GM12878 (cell line): ENCODE measurements at regions of chr1 and their contacts with region 1.

Region 1: DNA sequence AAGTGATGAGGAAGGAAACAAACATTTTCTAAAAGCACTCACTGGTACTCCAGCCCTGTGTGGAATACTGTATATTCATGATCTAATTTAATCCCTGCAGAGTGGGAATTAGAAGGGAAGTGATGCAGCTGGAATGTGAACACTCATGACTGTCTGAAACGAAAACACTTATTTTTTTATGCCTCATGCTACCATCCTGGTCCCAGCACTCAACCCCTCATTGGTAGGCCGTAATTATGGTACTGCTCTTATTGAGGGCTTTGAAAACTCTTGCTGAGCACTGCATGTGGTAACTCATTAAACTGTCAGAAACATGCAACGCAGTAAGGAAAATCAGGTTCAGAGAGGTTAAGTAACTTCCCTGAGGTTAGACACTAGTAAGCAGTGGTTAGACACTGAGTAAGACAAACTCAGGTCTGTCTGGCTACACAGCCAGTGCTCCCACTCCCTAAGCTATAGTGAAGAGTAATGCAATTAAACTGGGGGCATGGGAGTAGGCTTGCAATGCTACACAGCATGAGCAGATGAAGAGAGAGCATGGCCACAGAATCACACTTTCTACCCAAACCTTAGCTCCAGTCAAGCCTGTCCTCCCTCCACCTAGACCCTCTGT is 17.3 kb upstream of the TNFSF4 start:
- DNase-seq: no peak
- ATAC-seq: peak; percentile 13
- H3K4me3 ChIP-seq: no peak overlapping the region
- H3K27ac ChIP-seq: no peak overlapping the region
- H3K4me1 ChIP-seq: peaks cover 38% of the 10 kb centered on the region
- H3K27me3 ChIP-seq: no peaks in the 10 kb centered on the region
- CTCF ChIP-seq: no peak
- EP300 ChIP-seq: no peak
- POLR2A ChIP-seq: no peak
- RAD21 ChIP-seq: no peak

Region 2: DNA sequence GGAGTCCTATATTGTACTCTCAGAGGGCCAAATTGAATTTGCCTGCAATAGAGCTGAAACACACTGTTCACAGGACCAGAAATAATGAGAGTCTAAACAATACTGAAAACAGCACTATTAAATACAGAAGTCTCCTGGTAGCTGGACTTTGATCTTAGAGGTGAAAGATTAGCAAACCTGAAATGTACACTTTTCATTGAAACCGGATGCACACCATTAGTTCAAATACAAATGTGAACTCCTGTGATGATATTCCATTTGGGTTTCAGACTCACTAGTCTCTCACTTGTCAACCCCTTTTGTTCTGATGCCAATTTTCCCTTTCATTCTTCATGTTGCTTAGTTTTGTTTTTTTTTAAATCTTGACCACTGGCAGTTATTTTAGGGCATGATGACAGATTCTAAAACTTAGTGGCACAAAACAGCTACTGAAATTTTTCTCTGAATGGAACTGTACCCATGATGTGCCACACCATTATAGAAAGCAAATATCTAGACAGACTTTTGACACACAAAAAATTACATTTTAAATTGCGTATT is 11.4 kb before region 1 on chr1:
- CTCF ChIA-PET with region 1: interaction called, 71 read pairs
- POLR2A ChIA-PET with region 1: interaction called, 7 read pairs
- RAD21 ChIA-PET with region 1: interaction called, 13 read pairs
- SMC1A ChIA-PET with region 1: interaction called, 189 read pairs
- in situ Hi-C with region 1: no loop called
- intact Hi-C with region 1: no loop called
- DNase-seq: peak; percentile 90
- ATAC-seq: peak; percentile 91
- H3K4me3 ChIP-seq: no peak overlapping the region
- H3K27ac ChIP-seq: no peak overlapping the region
- H3K4me1 ChIP-seq: peaks cover 5% of the 10 kb centered on the region
- H3K27me3 ChIP-seq: no peaks in the 10 kb centered on the region
- CTCF ChIP-seq: no peak
- EP300 ChIP-seq: peak; percentile 58 to 92; a peak in 3 of 4 replicates
- POLR2A ChIP-seq: no peak
- RAD21 ChIP-seq: 0 out of 2 replicates have a peak, but pooled peaks have one; percentile 13

Region 3: DNA sequence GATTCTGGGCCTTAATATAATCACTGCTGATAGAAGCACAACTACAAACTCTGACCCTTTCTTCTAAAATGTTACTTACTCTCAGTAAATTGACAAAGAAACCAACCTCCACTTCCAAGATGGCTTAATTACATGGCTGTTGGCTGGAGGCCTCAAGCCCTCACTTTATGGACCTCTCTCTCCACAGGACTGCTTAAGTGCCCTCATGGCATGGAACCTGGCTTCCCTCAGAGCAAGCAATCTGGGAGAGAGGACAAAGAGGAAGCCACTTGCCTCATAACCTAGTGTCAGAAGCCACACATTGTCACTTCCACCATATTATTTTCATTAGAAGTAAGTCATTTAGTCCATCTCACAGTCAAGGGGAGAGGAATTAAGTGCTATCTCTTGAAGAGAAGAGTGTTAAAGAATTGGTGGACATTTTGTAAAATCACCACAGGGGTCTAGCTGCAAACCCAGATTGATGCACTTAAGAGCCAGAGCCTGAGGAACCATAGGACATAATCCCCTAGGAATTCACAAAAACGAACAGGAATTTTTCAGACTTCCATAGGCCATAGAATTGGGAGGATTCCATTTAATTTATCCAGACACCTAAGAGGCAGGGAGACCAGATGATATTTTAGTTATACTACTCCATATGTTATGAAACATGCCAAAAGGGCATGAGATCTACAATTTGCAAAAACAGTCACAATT is 80.3 kb after region 1 on chr1:
- CTCF ChIA-PET with region 1: no interaction called
- POLR2A ChIA-PET with region 1: no interaction called
- RAD21 ChIA-PET with region 1: no interaction called
- SMC1A ChIA-PET with region 1: no interaction called
- in situ Hi-C with region 1: no loop called
- intact Hi-C with region 1: no loop called
- DNase-seq: no peak
- ATAC-seq: peak; percentile 14
- H3K4me3 ChIP-seq: no peak overlapping the region
- H3K27ac ChIP-seq: no peak overlapping the region
- H3K4me1 ChIP-seq: peaks cover 7% of the 10 kb centered on the region
- H3K27me3 ChIP-seq: no peaks in the 10 kb centered on the region
- CTCF ChIP-seq: no peak
- EP300 ChIP-seq: no peak
- POLR2A ChIP-seq: no peak
- RAD21 ChIP-seq: no peak

Region 4: DNA sequence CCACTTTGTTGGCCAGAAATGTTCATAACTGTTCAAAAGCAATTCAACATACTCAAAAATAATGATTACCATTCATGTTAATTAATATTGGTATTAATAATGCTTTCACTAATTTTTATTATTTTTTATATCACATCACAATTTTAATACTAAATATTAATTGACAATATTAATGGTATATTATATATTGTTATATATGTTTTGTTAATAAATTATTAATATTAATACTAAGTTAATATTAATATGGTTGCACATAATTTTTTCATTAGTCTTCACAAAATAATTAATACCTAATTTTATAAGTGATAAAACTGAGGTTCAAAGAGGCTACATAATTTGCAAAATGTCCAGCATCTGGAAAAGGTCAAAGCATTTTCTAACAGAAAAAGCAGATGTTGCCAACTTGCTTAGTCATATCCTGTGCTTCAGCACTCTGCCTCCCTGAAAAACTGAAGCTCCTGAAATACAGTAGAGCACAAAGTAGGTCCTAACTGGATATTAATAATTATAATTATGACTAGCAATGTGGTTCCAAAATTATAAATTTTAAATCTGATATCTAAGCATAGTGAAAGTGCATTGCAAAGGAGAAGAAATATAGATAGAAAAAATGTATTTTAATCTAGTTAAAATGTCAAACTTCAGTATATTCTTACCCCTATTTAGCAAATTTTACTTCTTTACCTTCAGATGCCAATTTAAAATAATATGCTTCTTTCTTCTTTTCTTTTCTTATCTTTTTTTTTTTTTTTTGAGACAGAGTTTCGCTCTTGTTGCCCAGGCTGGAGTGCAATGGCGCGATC is 106.0 kb after region 1 on chr1:
- CTCF ChIA-PET with region 1: no interaction called
- POLR2A ChIA-PET with region 1: no interaction called
- RAD21 ChIA-PET with region 1: interaction called, 7 read pairs
- SMC1A ChIA-PET with region 1: interaction called, 3 read pairs
- in situ Hi-C with region 1: no loop called
- intact Hi-C with region 1: loop called (anchors 2 kb)
- DNase-seq: no peak
- ATAC-seq: peak; percentile 28
- H3K4me3 ChIP-seq: no peak overlapping the region
- H3K27ac ChIP-seq: peak overlapping the region; percentile 83
- H3K4me1 ChIP-seq: peaks cover 36% of the 10 kb centered on the region
- H3K27me3 ChIP-seq: no peaks in the 10 kb centered on the region
- CTCF ChIP-seq: no peak
- EP300 ChIP-seq: no peak
- POLR2A ChIP-seq: no peak
- RAD21 ChIP-seq: no peak

Region 5: DNA sequence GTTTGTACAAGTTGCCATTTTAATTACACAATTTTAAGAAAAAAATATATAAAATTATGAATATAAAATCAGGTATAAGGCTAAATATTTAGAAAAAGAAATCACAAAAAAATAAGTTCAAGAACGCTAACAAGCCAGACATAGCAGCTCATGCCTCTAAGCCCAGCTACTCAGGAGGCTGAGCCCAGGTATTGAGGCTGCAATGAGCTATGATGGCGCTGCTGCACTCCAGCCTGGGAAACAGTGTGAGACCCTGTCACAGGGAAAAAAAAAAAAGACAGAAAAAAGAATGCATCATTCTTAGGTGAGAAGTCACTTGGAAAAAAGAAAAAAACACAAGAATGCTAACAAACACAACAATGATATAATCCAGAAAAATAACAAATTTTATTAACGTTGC is 140.4 kb after region 1 on chr1:
- CTCF ChIA-PET with region 1: no interaction called
- POLR2A ChIA-PET with region 1: no interaction called
- RAD21 ChIA-PET with region 1: no interaction called
- SMC1A ChIA-PET with region 1: no interaction called
- in situ Hi-C with region 1: no loop called
- intact Hi-C with region 1: no loop called
- DNase-seq: no peak
- ATAC-seq: no peak
- H3K4me3 ChIP-seq: no peak overlapping the region
- H3K27ac ChIP-seq: no peak overlapping the region
- H3K4me1 ChIP-seq: peaks cover 13% of the 10 kb centered on the region
- H3K27me3 ChIP-seq: no peaks in the 10 kb centered on the region
- CTCF ChIP-seq: no peak
- EP300 ChIP-seq: no peak
- POLR2A ChIP-seq: no peak
- RAD21 ChIP-seq: no peak